ENCODE measurements at regions of chr15 and their contacts with region 1.

Region 1: DNA sequence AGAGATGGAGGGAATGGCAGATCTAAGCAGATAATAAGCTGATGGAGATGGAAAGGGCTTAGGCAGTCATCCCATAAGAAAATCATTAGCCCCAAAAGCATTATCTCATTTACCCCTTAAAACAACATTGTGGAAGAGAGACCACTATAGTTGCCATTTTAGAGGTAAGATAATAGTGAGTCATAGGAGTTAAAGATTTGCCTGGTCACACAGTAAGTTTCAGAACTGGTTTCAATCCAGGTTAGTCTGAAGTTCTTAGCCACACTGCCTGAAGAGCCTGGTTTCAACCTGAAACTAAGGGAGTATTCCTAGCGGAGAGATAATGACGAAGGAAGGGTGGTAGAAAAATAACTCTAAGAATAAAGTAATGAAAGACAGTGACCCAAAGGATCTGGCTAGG is 13.0 kb upstream of the UBR1 start:
- DNase-seq: no peak
- H3K4me3 Mint-ChIP-seq: no peak overlapping the region
- H3K27ac Mint-ChIP-seq: no peak overlapping the region
- H3K4me1 Mint-ChIP-seq: peaks cover 11% of the 10 kb centered on the region
- H3K27me3 Mint-ChIP-seq: peaks cover 35% of the 10 kb centered on the region
- CTCF ChIP-seq: no peak

Region 2: GRCh38 chr15:43133430-43134156 is 14.8 kb after region 1 on chr15 and contains the start of gene TMEM62:
- CTCF ChIA-PET with region 1: no interaction called
- POLR2A ChIA-PET with region 1: interaction called, 21 read pairs
- intact Hi-C with region 1: no loop called
- DNase-seq: peak; percentile 87
- H3K4me3 Mint-ChIP-seq: peak within 1 kb of the TSS; percentile 77
- H3K27ac Mint-ChIP-seq: peak within 1 kb of the TSS; percentile 82
- H3K4me1 Mint-ChIP-seq: peaks cover 10% of the 10 kb centered on the region
- H3K27me3 Mint-ChIP-seq: no peaks in the 10 kb centered on the region
- CTCF ChIP-seq: no peak
- total RNA-seq, gene TMEM62: 16.3 and 16.9 TPM in 2 replicates